Esophagus muscularis mucosa (tissue), 4 donors: ENCODE measurements at regions of chr11 and their contacts with region 1.

Region 1: GRCh38 chr11:4187055-4187988 is 92.7 kb downstream of the RRM1 start:
- DNase-seq: peak; percentile 96
- H3K4me3 ChIP-seq: peak overlapping the region; percentile 65 to 80 (median 70)
- H3K27ac ChIP-seq: peak overlapping the region; percentile 71 to 80 (median 80)
- H3K4me1 ChIP-seq: peaks cover 5 to 41% (median 34%) of the 10 kb centered on the region in 4 donors
- H3K27me3 ChIP-seq: no peaks in the 10 kb centered on the region
- CTCF ChIP-seq: peak; percentile 91 to 97 (median 94)
- EP300 ChIP-seq: no peak
- POLR2A ChIP-seq: no peak

Region 2: DNA sequence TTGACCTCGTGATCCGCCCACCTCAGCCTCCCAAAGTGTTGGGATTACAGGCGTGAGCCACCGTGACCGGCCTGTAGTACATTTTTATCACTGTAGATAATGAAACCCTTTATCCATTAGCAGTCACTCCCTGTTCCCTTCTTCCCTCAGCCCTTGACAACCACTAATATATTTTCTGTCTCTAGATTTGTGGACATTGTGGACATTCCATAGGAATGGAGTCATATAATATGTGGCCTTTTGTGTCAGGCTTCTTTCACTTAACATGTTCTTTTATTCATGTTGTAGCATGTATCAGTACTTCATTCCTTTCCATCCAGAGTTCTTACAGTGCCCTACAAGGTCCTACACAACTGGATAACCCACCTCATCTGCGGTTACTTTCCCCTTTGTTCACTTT is 62.2 kb before region 1 on chr11:
- intact Hi-C with region 1: no loop called
- DNase-seq: no peak
- H3K4me3 ChIP-seq: no peak overlapping the region
- H3K27ac ChIP-seq: no peak overlapping the region
- H3K4me1 ChIP-seq: no peaks in the 10 kb centered on the region
- H3K27me3 ChIP-seq: no peaks in the 10 kb centered on the region
- CTCF ChIP-seq: no peak
- EP300 ChIP-seq: no peak
- POLR2A ChIP-seq: no peak

Region 3: GRCh38 chr11:4493480-4493818 is 306.1 kb after region 1 on chr11:
- intact Hi-C with region 1: loop called (anchors 1 kb)
- DNase-seq: no peak
- H3K4me3 ChIP-seq: no peak overlapping the region
- H3K27ac ChIP-seq: no peak overlapping the region
- H3K4me1 ChIP-seq: peaks cover 0 to 18% (median 13%) of the 10 kb centered on the region in 4 donors
- H3K27me3 ChIP-seq: no peaks in the 10 kb centered on the region
- CTCF ChIP-seq: no peak
- EP300 ChIP-seq: no peak
- POLR2A ChIP-seq: no peak

Region 4: GRCh38 chr11:4539603-4540219 is 352.4 kb after region 1 on chr11:
- intact Hi-C with region 1: loop called (anchors 2 kb)
- DNase-seq: no peak
- H3K4me3 ChIP-seq: no peak overlapping the region
- H3K27ac ChIP-seq: no peak overlapping the region
- H3K4me1 ChIP-seq: no peaks in the 10 kb centered on the region
- H3K27me3 ChIP-seq: no peaks in the 10 kb centered on the region
- CTCF ChIP-seq: peak; percentile 51 to 70 (median 67)
- EP300 ChIP-seq: no peak
- POLR2A ChIP-seq: no peak